Heart right ventricle (tissue), 16 donors: ENCODE measurements at regions of chr15 and their contacts with region 1.

Region 1: DNA sequence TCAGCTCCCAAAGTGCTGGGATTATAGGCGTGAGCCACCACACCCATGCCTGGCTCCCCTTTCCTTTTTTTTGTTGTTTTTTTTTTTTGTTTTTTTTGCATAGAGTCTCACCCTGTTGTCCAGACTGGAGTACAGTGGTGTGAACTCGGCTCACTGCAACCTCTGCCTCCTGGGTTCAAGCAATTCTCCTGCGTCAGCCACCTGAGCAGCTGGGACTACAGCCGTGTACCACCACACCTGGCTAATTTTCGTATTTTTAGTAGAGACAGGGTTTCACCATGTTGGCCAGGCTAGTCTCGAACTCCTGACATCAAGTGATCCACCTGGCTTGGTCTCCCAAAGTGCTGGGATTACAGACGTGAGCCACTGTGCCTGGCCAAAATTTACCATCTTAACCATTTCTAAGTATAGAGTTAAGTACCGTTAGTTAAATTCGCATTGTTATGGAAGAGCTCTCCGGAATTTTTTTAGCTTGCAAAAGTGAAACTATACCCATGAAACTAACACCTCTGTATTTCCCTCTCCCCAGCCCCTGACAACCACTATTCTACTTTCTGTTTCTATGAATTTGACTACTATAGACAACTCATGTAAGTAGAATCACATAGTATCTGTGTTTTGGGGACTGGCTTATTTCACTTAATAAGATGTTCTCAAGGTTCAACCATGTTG is 70.9 kb upstream of the C15orf39 start:
- DNase-seq: no peak
- ATAC-seq: peak in 2 of 8 donors; percentile 24 to 62
- H3K4me3 ChIP-seq: peak overlapping the region in 1 of 10 donors; percentile 20
- H3K27ac ChIP-seq: peak overlapping the region in 3 of 10 donors; percentile 29 to 81 (median 44)
- H3K4me1 ChIP-seq: peaks cover 0 to 51% (median 0%) of the 10 kb centered on the region in 9 donors
- H3K27me3 ChIP-seq: no peaks in the 10 kb centered on the region
- CTCF ChIP-seq: no peak

Region 2: DNA sequence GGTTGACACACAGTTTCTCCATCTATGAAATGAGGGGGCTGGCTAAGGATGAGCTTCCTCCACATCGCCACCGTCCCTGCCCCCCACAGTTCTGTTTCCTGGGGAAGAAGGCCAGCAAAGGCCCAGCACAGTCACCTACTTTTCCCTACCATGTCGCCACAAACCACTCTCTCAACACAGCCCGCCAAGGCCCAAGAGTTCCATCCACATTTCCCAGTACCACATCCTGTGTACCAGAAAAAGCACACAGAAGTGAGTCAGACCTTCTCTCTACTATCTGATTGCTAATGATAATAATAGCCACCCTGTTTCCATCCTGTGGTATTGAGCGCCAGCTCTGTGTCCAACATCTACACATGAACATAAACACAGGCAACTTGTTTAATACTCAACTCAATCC is 40.7 kb after region 1 on chr15:
- intact Hi-C with region 1: loop called in 1 of 10 experiments (anchors 5 kb)
- DNase-seq: no peak
- ATAC-seq: no peak
- H3K4me3 ChIP-seq: no peak overlapping the region
- H3K27ac ChIP-seq: no peak overlapping the region
- H3K4me1 ChIP-seq: peaks cover 0 to 29% (median 4%) of the 10 kb centered on the region in 9 donors
- H3K27me3 ChIP-seq: no peaks in the 10 kb centered on the region
- CTCF ChIP-seq: no peak

Region 3: DNA sequence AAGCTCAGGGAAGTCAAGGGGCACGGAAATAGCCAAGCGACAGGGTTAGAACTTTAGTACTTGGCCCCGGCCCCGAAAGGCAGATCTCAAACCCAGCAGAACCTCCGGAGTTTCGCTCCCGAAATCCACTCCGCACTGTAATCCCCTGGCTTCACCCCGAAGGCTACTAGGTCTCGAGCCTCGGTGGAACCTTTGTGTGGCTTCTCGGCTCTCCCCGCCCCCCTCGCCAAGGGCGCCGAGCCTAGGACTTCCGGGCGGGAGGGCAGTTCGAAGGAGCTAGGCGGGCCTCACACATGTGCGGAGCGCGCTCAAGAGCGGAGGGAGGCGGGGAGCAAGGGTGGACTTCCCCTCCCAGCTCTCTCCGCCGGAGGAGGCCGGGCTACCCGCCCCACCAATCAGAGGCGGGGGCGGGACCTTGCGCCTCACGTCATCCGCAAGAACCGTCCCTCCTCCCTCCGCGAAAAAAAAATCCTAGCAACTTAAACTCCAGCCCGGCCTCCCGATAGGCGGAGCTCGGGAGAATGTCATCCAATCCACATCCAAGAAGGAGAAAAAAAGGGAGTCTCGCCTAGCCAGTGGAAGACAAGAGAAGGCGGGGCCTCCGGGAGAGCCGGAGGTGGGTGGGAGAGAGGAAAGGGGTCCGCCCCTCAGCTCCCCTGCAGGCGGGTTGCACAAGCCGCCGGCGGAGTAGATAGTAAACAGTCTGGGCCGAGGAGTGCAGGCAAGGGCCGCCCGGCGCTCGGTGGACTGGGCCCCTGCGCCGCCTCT is 323.2 kb after region 1 on chr15:
- intact Hi-C with region 1: no loop called
- DNase-seq: peak; percentile 97 to 98
- ATAC-seq: peak; percentile 61 to 79 (median 73)
- H3K4me3 ChIP-seq: peak overlapping the region; percentile 61 to 99 (median 94)
- H3K27ac ChIP-seq: peak overlapping the region; percentile 90 to 99 (median 98)
- H3K4me1 ChIP-seq: peaks cover 0 to 41% (median 31%) of the 10 kb centered on the region in 9 donors
- H3K27me3 ChIP-seq: no peaks in the 10 kb centered on the region
- CTCF ChIP-seq: peak in 1 of 9 donors; percentile 29